Activated T-helper 1 cell treated with anti-CD3 and anti-CD28 coated beads, Interleukin-12 subunit alpha, Interleukin-12 subunit beta, Interleukin-2, Interleukin-4 antibody, amounts not matched to agents 30 ng/mL and 10 ng/mL and 1 ng/mL, durations not matched to agents 14 hours and 24 hours and 36 hours (primary cell): ENCODE measurements at regions of chr6 and their contacts with region 1.

Region 1: DNA sequence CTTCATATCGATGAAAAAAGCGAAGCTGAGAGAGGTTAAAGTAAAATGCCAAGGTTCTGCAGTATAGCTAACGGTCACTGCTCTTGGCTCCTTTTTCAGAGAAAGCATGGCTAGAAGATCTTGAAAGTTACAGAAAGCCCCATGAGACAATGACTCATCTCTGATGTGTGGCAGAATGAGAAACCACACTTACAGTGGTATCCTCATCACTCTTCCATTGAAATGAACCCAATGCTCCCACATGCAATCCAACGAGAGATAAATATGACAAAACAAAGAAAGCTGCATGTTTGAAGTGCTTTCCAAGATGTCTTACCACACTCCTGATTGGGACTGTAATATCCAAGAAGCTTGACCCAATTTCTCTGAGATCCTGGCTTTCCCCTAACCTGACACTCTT is 694.9 kb downstream of the PRKN start:
- DNase-seq: no peak
- H3K4me3 Mint-ChIP-seq: peak overlapping the region; percentile 27
- H3K27ac Mint-ChIP-seq: peak overlapping the region; percentile 74
- H3K4me1 Mint-ChIP-seq: peaks cover 27% of the 10 kb centered on the region
- H3K27me3 Mint-ChIP-seq: no peaks in the 10 kb centered on the region

Region 2: GRCh38 chr6:162099685-162100084 is 67.1 kb after region 1 on chr6:
- intact Hi-C with region 1: loop called (anchors 1 kb)
- DNase-seq: peak; percentile 1
- H3K4me3 Mint-ChIP-seq: no peak overlapping the region
- H3K27ac Mint-ChIP-seq: peak overlapping the region; percentile 40
- H3K4me1 Mint-ChIP-seq: no peaks in the 10 kb centered on the region
- H3K27me3 Mint-ChIP-seq: no peaks in the 10 kb centered on the region

Region 3: DNA sequence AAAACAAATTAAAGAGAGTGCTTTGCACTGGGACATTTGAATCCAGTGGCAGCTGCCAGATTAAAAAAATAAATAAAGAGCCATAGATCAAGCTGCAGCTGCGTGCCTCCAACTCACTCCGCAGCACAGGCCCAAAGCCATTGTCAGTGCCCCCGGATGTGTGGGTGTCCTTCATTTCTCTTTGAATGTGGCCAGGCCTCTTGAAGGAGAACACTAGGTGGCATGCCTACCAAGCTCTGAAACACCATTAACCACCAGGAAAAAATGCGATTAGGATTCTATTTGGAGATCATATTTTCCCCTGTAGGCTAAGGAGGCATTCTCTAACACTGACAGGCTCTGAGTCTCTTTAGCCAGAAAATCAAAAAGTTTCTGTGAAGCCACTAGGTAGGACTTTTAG is 145.1 kb after region 1 on chr6:
- intact Hi-C with region 1: loop called (anchors 1 kb)
- DNase-seq: no peak
- H3K4me3 Mint-ChIP-seq: no peak overlapping the region
- H3K27ac Mint-ChIP-seq: no peak overlapping the region
- H3K4me1 Mint-ChIP-seq: peaks cover 21% of the 10 kb centered on the region
- H3K27me3 Mint-ChIP-seq: no peaks in the 10 kb centered on the region